ENCODE measurements at regions of chr10 and their contacts with region 1.

Region 1: DNA sequence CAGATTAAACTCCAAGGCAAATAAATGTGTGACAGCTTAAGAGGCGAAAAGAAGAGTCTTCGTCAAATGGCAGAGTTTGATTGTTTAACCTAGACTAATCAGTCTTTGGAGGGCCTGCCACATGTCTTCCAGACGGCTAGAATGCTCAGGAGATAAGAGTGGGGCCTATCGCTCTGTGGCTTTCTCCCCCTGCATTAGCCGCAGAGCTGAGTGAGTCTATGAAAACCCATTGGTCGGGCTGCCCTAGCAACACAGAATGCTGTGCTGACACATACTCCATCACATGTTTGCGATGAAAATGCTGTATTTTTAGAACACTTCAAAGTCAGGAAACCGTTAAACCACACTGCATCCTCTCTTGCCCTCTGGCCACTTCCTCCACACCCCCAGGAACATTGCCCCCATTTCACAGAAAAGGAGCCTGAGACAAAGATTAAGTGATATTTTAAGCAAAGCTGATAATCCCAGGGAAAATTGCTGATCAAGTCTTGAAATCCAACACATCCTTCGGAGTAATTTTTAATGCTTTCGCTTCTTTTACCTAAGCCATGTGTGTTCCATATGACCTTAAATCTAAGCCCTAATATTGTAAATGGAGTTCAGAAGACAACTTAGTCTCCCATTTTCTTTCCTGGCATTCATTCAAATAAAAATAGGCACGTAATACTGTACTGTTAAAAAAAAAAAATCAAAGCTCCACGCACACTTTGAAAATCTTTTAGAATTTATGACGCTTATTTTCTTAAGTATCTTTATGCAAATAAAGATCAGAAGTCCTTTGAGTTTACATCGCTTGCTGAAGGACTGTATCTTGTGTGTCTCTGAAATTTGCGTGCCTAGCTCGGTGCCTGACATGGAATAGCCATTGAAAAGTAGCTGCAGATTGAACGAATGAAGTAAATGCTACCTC is 161.2 kb downstream of the CELF2 start:
- DNase-seq: peak; percentile 92
- H3K4me3 Mint-ChIP-seq: peak overlapping the region; percentile 89
- H3K27ac Mint-ChIP-seq: no peak overlapping the region
- H3K4me1 Mint-ChIP-seq: peaks cover 95% of the 10 kb centered on the region
- H3K27me3 Mint-ChIP-seq: no peaks in the 10 kb centered on the region

Region 2: GRCh38 chr10:11165591-11166543 is 13.0 kb before region 1 on chr10:
- CTCF ChIA-PET with region 1: interaction called, 41 read pairs
- POLR2A ChIA-PET with region 1: interaction called, 253 read pairs
- intact Hi-C with region 1: loop called (anchors 1 kb)
- DNase-seq: peak; percentile 83
- H3K4me3 Mint-ChIP-seq: no peak overlapping the region
- H3K27ac Mint-ChIP-seq: peak overlapping the region; percentile 100
- H3K4me1 Mint-ChIP-seq: peaks cover 23% of the 10 kb centered on the region
- H3K27me3 Mint-ChIP-seq: no peaks in the 10 kb centered on the region

Region 3: GRCh38 chr10:11209830-11210181 is 30.9 kb after region 1 on chr10:
- CTCF ChIA-PET with region 1: interaction called, 5 read pairs
- POLR2A ChIA-PET with region 1: interaction called, 28 read pairs
- intact Hi-C with region 1: loop called (anchors 1 kb)
- DNase-seq: no peak
- H3K4me3 Mint-ChIP-seq: peak overlapping the region; percentile 65
- H3K27ac Mint-ChIP-seq: peak overlapping the region; percentile 92
- H3K4me1 Mint-ChIP-seq: peaks cover 97% of the 10 kb centered on the region
- H3K27me3 Mint-ChIP-seq: no peaks in the 10 kb centered on the region

Region 4: GRCh38 chr10:11225935-11226334 is 47.1 kb after region 1 on chr10:
- CTCF ChIA-PET with region 1: interaction called, 8 read pairs
- POLR2A ChIA-PET with region 1: interaction called, 32 read pairs
- intact Hi-C with region 1: loop called (anchors 1 kb)
- DNase-seq: peak; percentile 88
- H3K4me3 Mint-ChIP-seq: peak overlapping the region; percentile 62
- H3K27ac Mint-ChIP-seq: peak overlapping the region; percentile 97
- H3K4me1 Mint-ChIP-seq: peaks cover 95% of the 10 kb centered on the region
- H3K27me3 Mint-ChIP-seq: no peaks in the 10 kb centered on the region

Region 5: DNA sequence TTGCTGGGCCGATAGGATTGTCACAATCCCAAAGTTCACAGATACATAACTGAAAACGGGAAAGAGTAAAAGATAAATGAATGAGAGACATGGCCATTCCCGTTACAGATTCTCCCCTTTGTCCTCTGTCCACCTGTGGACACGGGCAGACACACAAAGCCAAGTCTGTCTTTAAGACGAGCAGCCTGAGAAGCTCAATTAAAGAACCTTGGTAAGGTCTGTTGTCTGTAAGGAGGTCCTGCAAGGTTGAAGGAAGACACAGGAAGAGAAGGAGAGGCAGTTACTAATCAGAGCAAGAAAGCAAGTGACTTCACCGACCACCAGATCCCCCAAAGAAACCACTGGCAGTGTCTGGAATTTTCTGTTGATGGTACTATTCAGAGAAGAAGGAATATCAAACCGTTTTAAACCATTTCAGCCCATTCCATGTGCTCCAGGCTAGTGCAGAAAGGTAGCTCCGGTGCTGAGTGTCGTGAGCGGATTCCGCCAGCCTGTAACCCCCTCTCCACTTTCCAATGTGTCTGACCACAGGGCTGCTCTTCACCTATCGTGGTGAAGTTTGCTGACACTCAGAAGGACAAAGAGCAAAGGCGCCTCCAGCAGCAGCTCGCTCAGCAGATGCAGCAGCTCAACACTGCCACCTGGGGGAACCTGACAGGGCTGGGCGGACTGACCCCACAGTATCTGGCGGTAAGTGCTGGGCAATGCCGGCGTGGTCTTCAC is 91.4 kb after region 1 on chr10:
- CTCF ChIA-PET with region 1: interaction called, 28 read pairs
- POLR2A ChIA-PET with region 1: interaction called, 6 read pairs
- intact Hi-C with region 1: no loop called
- DNase-seq: peak; percentile 85
- H3K4me3 Mint-ChIP-seq: peak overlapping the region; percentile 25
- H3K27ac Mint-ChIP-seq: peak overlapping the region; percentile 52
- H3K4me1 Mint-ChIP-seq: peaks cover 90% of the 10 kb centered on the region
- H3K27me3 Mint-ChIP-seq: no peaks in the 10 kb centered on the region

Region 6: GRCh38 chr10:12129222-12130111 is 950.6 kb after region 1 on chr10 and contains the start of gene SEC61A2:
- CTCF ChIA-PET with region 1: no interaction called
- POLR2A ChIA-PET with region 1: no interaction called
- intact Hi-C with region 1: loop called (anchors 10 kb)
- DNase-seq: peak; percentile 98
- H3K4me3 Mint-ChIP-seq: peak within 1 kb of the TSS; percentile 83
- H3K27ac Mint-ChIP-seq: peak within 1 kb of the TSS; percentile 74
- H3K4me1 Mint-ChIP-seq: peaks cover 31% of the 10 kb centered on the region
- H3K27me3 Mint-ChIP-seq: no peaks in the 10 kb centered on the region
- total RNA-seq, gene SEC61A2: 14.4 to 14.6 TPM

Measured in activated CD4-positive, alpha-beta memory T cell treated with anti-CD3 and anti-CD28 coated beads for 36 hours (primary cell).